Esophagus muscularis mucosa (tissue), 4 donors: ENCODE measurements at regions of chr19 and their contacts with region 1.

Region 1: GRCh38 chr19:38838573-38839269 is 7.1 kb upstream of the ECH1 start:
- DNase-seq: no peak
- H3K4me3 ChIP-seq: no peak overlapping the region
- H3K27ac ChIP-seq: peak overlapping the region in 2 of 4 donors; percentile 10 to 36
- H3K4me1 ChIP-seq: peaks cover 3 to 47% (median 36%) of the 10 kb centered on the region in 4 donors
- H3K27me3 ChIP-seq: no peaks in the 10 kb centered on the region
- CTCF ChIP-seq: no peak
- EP300 ChIP-seq: no peak
- POLR2A ChIP-seq: no peak

Region 2: GRCh38 chr19:38729653-38730469 is 108.9 kb before region 1 on chr19:
- intact Hi-C with region 1: loop called (anchors 5 kb)
- DNase-seq: no peak
- H3K4me3 ChIP-seq: no peak overlapping the region
- H3K27ac ChIP-seq: peak overlapping the region; percentile 54 to 72 (median 62)
- H3K4me1 ChIP-seq: peaks cover 41 to 78% (median 59%) of the 10 kb centered on the region in 4 donors
- H3K27me3 ChIP-seq: no peaks in the 10 kb centered on the region
- CTCF ChIP-seq: peak; percentile 65 to 82 (median 75)
- EP300 ChIP-seq: no peak
- POLR2A ChIP-seq: no peak